ENCODE measurements at regions of chr2 and their contacts with region 1.

Region 1: GRCh38 chr2:102063941-102064678 is 72.3 kb downstream of the IL1R2 start:
- DNase-seq: peak; percentile 89 to 99 (median 98)
- H3K4me3 ChIP-seq: no peak overlapping the region
- H3K27ac ChIP-seq: peak overlapping the region; percentile 89 to 98 (median 95)
- H3K4me1 ChIP-seq: peaks cover 39 to 58% of the 10 kb centered on the region in 2 donors
- H3K27me3 ChIP-seq: no peaks in the 10 kb centered on the region
- CTCF ChIP-seq: no peak
- POLR2A ChIP-seq: peak in 1 of 2 donors; percentile 79

Region 2: GRCh38 chr2:102033031-102033749 is 30.9 kb before region 1 on chr2:
- intact Hi-C with region 1: loop called in 1 of 2 experiments (anchors 5 kb)
- DNase-seq: peak in 5 of 7 donors; percentile 40 to 67 (median 59)
- H3K4me3 ChIP-seq: no peak overlapping the region
- H3K27ac ChIP-seq: peak overlapping the region in 3 of 5 donors; percentile 18 to 50 (median 33)
- H3K4me1 ChIP-seq: peaks cover 16 to 46% of the 10 kb centered on the region in 2 donors
- H3K27me3 ChIP-seq: no peaks in the 10 kb centered on the region
- CTCF ChIP-seq: no peak
- POLR2A ChIP-seq: no peak

Region 3: GRCh38 chr2:102166189-102166845 is 102.2 kb after region 1 on chr2:
- intact Hi-C with region 1: no loop called
- DNase-seq: peak in 6 of 7 donors; percentile 44 to 75 (median 56)
- H3K4me3 ChIP-seq: no peak overlapping the region
- H3K27ac ChIP-seq: peak overlapping the region in 2 of 5 donors; percentile 15 to 31
- H3K4me1 ChIP-seq: peaks cover 5 to 7% of the 10 kb centered on the region in 2 donors
- H3K27me3 ChIP-seq: no peaks in the 10 kb centered on the region
- CTCF ChIP-seq: peak in 5 of 6 experiments; percentile 52 to 76 (median 65)
- POLR2A ChIP-seq: no peak

Region 4: DNA sequence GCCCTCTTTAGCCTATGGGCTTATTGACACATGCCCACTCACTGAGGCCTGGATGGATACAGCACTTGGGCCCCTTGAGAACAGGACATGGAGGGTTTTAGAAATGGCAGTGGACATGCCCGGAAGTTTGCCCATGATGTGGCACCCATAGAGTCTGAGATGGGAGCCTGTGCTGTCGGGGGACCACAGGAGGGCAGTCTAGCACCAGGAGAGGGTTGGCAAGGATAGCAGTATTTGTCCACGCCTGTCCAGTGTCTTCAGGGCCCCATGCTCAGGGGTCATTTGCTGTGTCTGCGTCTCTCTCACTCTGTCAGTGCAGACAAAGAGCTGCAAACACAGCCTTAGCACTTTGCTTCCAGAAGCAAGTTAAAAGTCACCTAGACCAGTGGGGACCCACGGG is 171.4 kb after region 1 on chr2:
- intact Hi-C with region 1: loop called in 1 of 2 experiments (anchors 5 kb)
- DNase-seq: no peak
- H3K4me3 ChIP-seq: no peak overlapping the region
- H3K27ac ChIP-seq: no peak overlapping the region
- H3K4me1 ChIP-seq: peaks cover 0 to 4% of the 10 kb centered on the region in 2 donors
- H3K27me3 ChIP-seq: no peaks in the 10 kb centered on the region
- CTCF ChIP-seq: peak in 4 of 6 experiments; percentile 5 to 54 (median 35)
- POLR2A ChIP-seq: no peak

Region 5: GRCh38 chr2:102258386-102259074 is 194.4 kb after region 1 on chr2:
- intact Hi-C with region 1: no loop called
- DNase-seq: peak in 2 of 7 donors; percentile 25 to 40
- H3K4me3 ChIP-seq: no peak overlapping the region
- H3K27ac ChIP-seq: peak overlapping the region in 1 of 5 donors; percentile 25
- H3K4me1 ChIP-seq: no peaks in the 10 kb centered on the region
- H3K27me3 ChIP-seq: no peaks in the 10 kb centered on the region
- CTCF ChIP-seq: no peak
- POLR2A ChIP-seq: no peak

Measured in adrenal gland (tissue), 19 donors.